Naive thymus-derived CD8-positive, alpha-beta T cell (primary cell): ENCODE measurements at regions of chr19 and their contacts with region 1.

Region 1: GRCh38 chr19:13880059-13881043 is 3.4 kb downstream of the NANOS3 start:
- DNase-seq: peak; percentile 93 to 98 (median 95)
- ATAC-seq: peak; percentile 94
- H3K4me3 Mint-ChIP-seq: peak overlapping the region; percentile 47 to 77 (median 67)
- H3K27ac Mint-ChIP-seq: peak overlapping the region in 9 of 10 donors; percentile 26 to 81 (median 74)
- H3K4me1 Mint-ChIP-seq: peaks cover 7 to 46% (median 40%) of the 10 kb centered on the region in 4 donors
- H3K27me3 Mint-ChIP-seq: no peaks in the 10 kb centered on the region

Region 2: DNA sequence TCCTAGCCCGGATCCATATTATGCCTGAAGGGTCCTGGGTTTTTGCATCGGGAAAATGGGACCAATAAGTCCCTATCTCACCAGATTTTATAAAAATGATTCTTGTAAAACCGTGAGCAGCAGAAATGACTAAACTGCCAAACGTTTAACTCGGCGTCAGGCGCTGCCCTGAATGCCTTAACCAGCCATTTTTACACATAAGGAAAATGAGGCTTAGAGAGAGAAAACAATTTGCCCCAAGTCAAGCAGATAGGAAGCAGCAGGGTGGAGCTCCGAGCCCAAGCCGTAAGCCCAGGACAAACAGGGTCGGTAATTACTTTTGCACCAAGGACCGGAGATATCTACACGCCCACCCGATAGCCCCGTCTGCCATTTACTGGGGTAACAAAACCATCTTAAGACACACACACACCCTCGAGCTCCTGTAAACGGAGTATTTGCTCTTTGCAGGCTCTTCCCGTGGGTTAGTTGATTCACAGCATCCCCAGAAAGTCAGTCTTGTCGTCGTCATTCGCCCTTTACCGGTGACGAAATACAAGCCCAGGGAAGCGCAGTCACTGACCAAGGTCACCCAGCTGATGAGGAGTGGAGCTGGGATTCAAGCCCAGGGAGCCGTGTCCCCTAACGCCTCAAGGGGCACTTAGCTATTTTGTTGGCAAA is 132.1 kb before region 1 on chr19:
- POLR2A ChIA-PET with region 1: no interaction called
- DNase-seq: peak in 1 of 10 donors; percentile 28
- ATAC-seq: peak; percentile 13 to 28
- H3K4me3 Mint-ChIP-seq: peak overlapping the region; percentile 86 to 92 (median 90)
- H3K27ac Mint-ChIP-seq: peak overlapping the region; percentile 84 to 98 (median 94)
- H3K4me1 Mint-ChIP-seq: peaks cover 10 to 44% (median 30%) of the 10 kb centered on the region in 4 donors
- H3K27me3 Mint-ChIP-seq: no peaks in the 10 kb centered on the region

Region 3: DNA sequence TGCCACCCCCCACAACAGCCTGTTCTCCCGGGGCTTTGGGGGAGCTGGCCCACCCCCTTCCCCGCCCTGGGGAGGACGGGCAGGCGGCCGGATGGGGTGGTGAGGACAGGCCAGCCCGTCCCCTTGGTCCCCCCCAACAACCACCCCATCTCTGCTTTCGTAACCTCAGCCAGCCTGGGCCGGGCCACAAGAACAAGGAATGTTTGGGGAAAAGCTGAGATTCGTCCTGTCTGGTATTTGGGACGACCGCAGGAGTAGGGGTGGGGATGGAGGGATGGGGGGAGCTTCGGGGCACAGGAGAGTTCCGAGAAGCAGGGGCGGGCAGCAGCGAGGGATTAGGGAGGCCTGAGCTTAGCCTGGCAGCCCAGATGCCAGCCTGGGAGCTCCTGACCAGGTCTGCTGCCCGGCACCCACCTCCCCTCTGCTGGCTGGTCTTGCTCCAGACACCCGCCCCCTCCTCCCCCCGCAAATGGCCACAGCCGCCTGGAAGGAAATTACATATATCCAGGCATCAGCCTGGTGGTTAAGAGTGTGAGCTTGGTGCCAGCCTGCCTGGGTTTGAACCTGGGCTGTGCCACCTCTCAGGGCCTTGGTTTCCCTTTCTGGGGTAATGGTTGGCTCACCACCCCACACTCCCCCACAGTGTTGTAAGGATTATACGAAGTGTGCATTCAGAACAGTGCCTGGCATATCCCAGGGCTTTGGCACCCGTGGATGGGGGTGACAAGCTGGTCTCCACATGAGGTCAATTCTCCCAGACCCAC is 58.1 kb after region 1 on chr19 and contains the start of gene PODNL1:
- POLR2A ChIA-PET with region 1: no interaction called
- DNase-seq: no peak
- ATAC-seq: no peak
- H3K4me3 Mint-ChIP-seq: no peak within 1 kb of the TSS
- H3K27ac Mint-ChIP-seq: no peak within 1 kb of the TSS
- H3K4me1 Mint-ChIP-seq: peaks cover 5 to 15% (median 10%) of the 10 kb centered on the region in 4 donors
- H3K27me3 Mint-ChIP-seq: peaks cover under 1 to 18% (median 6%) of the 10 kb centered on the region in 5 donors
- polyA plus RNA-seq, gene PODNL1: not detected

Region 4: GRCh38 chr19:14072535-14073260 is 192.3 kb after region 1 on chr19 and contains the start of gene MISP3:
- POLR2A ChIA-PET with region 1: interaction called, 10 read pairs
- DNase-seq: peak in 4 of 10 donors; percentile 13 to 26 (median 18)
- ATAC-seq: peak in 1 of 2 donors; percentile 1
- H3K4me3 Mint-ChIP-seq: peak within 1 kb of the TSS; percentile 84 to 97 (median 92)
- H3K27ac Mint-ChIP-seq: peak within 1 kb of the TSS in 7 of 10 donors; percentile 57 to 97 (median 87)
- H3K4me1 Mint-ChIP-seq: peaks cover 7 to 21% (median 17%) of the 10 kb centered on the region in 4 donors
- H3K27me3 Mint-ChIP-seq: no peaks in the 10 kb centered on the region
- polyA plus RNA-seq, gene MISP3: 0.36 to 1.4 (median 0.59) TPM